PC-3 (cell line): ENCODE measurements at regions of chr11 and their contacts with region 1.

Region 1: GRCh38 chr11:104089481-104089880 is 53.0 kb downstream of the DDI1 start:
- DNase-seq: no peak
- ATAC-seq: no peak
- H3K4me3 ChIP-seq: no peak overlapping the region
- H3K27ac ChIP-seq: no peak overlapping the region
- H3K4me1 ChIP-seq: no peaks in the 10 kb centered on the region; the same call in 1 of the 2 replicates
- H3K27me3 ChIP-seq: peaks cover 10% of the 10 kb centered on the region; the same call in 1 of the 2 replicates
- CTCF ChIP-seq: no peak

Region 2: GRCh38 chr11:103970701-103971249 is 118.7 kb before region 1 on chr11:
- CTCF ChIA-PET with region 1: no interaction called
- POLR2A ChIA-PET with region 1: no interaction called
- intact Hi-C with region 1: no loop called
- DNase-seq: no peak
- ATAC-seq: no peak
- H3K4me3 ChIP-seq: no peak overlapping the region
- H3K27ac ChIP-seq: no peak overlapping the region
- H3K4me1 ChIP-seq: no peaks in the 10 kb centered on the region
- H3K27me3 ChIP-seq: peaks cover 21% of the 10 kb centered on the region; the same call in 1 of the 2 replicates
- CTCF ChIP-seq: no peak

Region 3: DNA sequence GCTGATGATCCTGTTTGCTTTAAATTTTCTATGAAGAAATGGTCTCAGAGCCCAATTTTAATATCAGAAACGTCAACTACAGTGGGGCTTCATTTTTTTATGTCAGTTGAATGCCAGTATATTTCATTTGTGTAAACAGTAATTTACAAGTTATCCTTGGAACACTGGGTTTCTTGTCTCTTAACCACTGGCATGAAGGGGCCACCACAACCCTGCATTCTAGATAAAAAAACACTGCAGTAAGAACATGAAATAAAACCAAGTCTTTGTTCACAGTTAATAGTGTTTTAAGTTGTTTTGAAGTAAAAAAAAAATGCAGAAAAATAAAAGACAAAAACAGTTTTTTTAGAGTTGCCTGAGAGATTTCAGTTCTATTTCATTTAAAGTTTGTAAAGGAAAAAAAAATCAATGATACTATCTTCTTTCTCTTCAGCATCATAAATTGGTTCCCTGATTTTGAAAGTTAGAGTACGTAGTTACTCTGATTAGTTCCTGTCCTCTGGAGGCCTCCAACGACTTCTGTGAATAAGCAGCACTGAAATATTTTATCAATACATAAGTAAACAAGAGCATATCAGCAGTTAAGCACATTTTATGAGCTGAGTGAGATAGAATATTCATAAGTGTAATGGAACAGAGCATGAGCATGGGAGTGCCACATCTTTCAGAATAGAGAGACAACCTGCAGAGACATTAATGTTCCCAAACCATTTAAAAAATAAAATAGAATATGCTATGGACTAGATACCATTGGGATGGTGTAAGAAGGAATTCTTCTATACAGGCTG is 60.8 kb before region 1 on chr11:
- CTCF ChIA-PET with region 1: no interaction called
- POLR2A ChIA-PET with region 1: interaction called, 16 read pairs
- intact Hi-C with region 1: no loop called
- DNase-seq: no peak
- ATAC-seq: no peak
- H3K4me3 ChIP-seq: no peak overlapping the region
- H3K27ac ChIP-seq: no peak overlapping the region
- H3K4me1 ChIP-seq: peaks cover 6% of the 10 kb centered on the region
- H3K27me3 ChIP-seq: no peaks in the 10 kb centered on the region
- CTCF ChIP-seq: no peak